Mammary epithelial cell (primary cell): ENCODE measurements at regions of chr12 and their contacts with region 1.

Region 1: GRCh38 chr12:27960821-27961220 is 11.7 kb downstream of the PTHLH start:
- DNase-seq: no peak
- H3K4me3 ChIP-seq: no peak overlapping the region
- H3K27ac ChIP-seq: no peak overlapping the region
- H3K4me1 ChIP-seq: peaks cover 18% of the 10 kb centered on the region
- H3K27me3 ChIP-seq: no peaks in the 10 kb centered on the region
- CTCF ChIP-seq: no peak

Region 2: DNA sequence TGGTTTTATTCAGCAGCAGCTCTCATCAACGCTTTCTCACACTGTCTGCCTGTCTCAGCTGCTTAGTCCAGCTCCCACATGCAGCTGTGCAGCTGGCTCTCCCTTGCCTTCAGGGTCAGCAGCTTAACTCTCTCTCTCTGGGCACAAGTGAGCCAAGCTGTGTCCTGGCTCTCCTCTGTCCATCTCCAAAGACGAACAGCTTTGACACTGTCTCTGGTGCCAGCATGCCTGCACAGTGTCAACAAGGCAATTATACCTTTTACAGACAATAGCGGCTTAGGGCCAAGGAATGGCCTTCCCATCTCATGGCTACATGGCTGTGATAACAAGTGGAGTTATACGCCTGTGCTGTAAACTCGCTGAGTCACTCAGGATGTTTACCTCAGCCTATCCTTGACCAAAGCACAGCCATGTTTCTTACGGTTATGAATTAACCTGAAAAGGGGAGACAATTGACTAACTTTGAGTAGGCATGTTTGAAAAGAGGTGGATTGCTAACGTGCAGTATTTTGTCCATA is 142.4 kb before region 1 on chr12:
- CTCF ChIA-PET with region 1: no interaction called
- dilution Hi-C with region 1: no loop called
- in situ Hi-C with region 1: no loop called
- intact Hi-C with region 1: no loop called
- DNase-seq: no peak
- H3K4me3 ChIP-seq: no peak overlapping the region
- H3K27ac ChIP-seq: no peak overlapping the region
- H3K4me1 ChIP-seq: peaks cover 25% of the 10 kb centered on the region
- H3K27me3 ChIP-seq: no peaks in the 10 kb centered on the region
- CTCF ChIP-seq: no peak

Region 3: DNA sequence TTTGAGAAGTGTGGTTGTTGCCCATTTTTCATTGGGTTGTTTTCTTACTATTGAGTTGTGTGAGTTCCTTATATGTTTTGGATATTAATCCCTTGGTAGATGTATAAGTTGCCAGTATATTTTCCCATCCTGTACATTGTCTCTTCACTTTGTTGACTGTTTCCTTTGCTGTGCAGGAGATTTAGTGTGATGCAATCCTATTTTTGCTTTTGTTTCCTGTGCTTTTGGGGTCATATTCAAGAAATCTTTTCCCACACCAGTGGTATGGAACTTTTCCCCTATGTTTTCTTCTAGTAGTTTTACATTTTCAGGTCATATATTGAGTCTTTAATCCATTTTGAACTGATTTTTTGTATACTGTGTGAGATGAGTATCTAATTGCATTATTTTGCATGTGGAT is 81.1 kb before region 1 on chr12:
- CTCF ChIA-PET with region 1: no interaction called
- dilution Hi-C with region 1: no loop called
- in situ Hi-C with region 1: no loop called
- intact Hi-C with region 1: no loop called
- DNase-seq: no peak
- H3K4me3 ChIP-seq: no peak overlapping the region
- H3K27ac ChIP-seq: no peak overlapping the region
- H3K4me1 ChIP-seq: no peaks in the 10 kb centered on the region
- H3K27me3 ChIP-seq: no peaks in the 10 kb centered on the region
- CTCF ChIP-seq: no peak

Region 4: DNA sequence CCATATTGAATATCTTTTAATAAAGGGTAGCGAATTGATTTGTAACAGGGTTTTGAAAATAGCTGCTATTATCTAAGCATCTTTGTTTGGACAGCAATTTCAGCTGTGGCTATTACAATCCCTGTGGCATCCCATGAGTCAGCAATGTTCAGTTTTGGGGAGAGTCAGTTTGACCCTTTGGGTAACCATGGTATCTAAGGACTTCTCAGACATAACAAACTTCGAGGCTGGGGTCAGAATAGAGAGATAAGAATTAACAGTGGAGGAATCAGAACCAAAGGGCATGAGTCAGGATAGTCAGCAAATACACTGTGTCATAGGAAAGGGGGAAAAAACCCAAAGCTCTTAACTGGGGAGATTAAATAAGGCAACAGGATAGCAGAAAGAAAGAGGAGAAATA is 23.5 kb after region 1 on chr12:
- CTCF ChIA-PET with region 1: no interaction called
- dilution Hi-C with region 1: no loop called
- in situ Hi-C with region 1: no loop called
- intact Hi-C with region 1: no loop called
- DNase-seq: peak; percentile 96
- H3K4me3 ChIP-seq: no peak overlapping the region
- H3K27ac ChIP-seq: peak overlapping the region; percentile 98
- H3K4me1 ChIP-seq: peaks cover 44% of the 10 kb centered on the region
- H3K27me3 ChIP-seq: no peaks in the 10 kb centered on the region
- CTCF ChIP-seq: no peak

Region 5: DNA sequence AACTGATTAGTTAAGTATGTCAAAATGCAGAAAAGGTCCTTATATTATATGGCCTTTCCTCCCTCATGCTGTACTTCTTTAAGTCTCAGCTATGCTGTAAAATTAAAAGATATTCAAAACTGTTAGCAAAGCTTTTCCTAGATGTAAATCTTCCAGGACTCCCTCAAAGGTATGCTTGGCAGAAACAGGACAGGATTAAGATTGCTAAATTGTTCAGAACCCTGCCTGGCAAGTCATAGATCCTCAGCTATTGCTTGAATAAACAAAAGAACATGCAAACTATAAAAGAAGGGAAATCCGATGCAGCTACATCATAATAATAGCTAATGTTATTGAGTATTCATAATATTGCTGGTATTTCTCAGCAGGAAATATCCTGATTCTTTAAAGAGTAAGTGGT is 552.1 kb after region 1 on chr12:
- CTCF ChIA-PET with region 1: no interaction called
- dilution Hi-C with region 1: no loop called
- in situ Hi-C with region 1: no loop called
- intact Hi-C with region 1: loop called (anchors 5 kb)
- DNase-seq: no peak
- H3K4me3 ChIP-seq: no peak overlapping the region
- H3K27ac ChIP-seq: no peak overlapping the region
- H3K4me1 ChIP-seq: no peaks in the 10 kb centered on the region
- H3K27me3 ChIP-seq: no peaks in the 10 kb centered on the region
- CTCF ChIP-seq: no peak